ENCODE measurements at regions of chr13 and their contacts with region 1.

Region 1: GRCh38 chr13:74070065-74070464 is 64.1 kb downstream of the KLF12 start:
- DNase-seq: peak; percentile 73 to 81 (median 75)
- H3K4me3 ChIP-seq: peak overlapping the region in 1 of 2 donors; percentile 43
- H3K4me3 Mint-ChIP-seq: peak overlapping the region; percentile 68 to 89 (median 79)
- H3K27ac ChIP-seq: peak overlapping the region; percentile 15
- H3K27ac Mint-ChIP-seq: peak overlapping the region; percentile 73 to 94 (median 89)
- H3K4me1 ChIP-seq: peaks cover 92% of the 10 kb centered on the region
- H3K4me1 Mint-ChIP-seq: peaks cover 64 to 85% (median 77%) of the 10 kb centered on the region in 4 donors
- H3K27me3 ChIP-seq: no peaks in the 10 kb centered on the region
- H3K27me3 Mint-ChIP-seq: no peaks in the 10 kb centered on the region

Region 2: DNA sequence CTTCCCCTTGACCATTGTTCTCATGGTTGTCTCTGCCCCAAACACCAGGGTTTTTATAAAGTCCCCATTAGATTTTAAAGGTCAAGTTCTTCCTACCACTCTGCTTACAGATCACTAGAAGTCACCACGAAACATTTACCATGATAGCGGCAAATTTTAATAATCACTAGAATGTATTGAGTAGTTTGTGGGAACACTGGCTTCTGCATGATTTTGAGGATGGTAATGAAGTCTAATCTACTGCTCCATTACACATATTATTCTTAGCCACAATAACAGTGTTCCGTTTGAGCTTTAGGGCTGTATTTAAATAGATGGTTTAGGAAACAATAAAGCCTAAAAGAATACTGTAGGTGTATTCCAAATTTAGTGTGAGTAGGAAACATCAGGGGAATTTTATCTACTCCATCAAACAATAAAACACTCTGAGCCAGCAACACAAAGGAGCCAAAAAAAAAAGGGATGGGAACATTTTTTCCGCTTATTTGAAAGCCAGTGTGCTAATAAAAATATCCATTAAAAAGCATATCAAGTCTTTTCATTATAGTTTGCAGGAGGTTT is 14.4 kb after region 1 on chr13:
- CTCF ChIA-PET with region 1: interaction called, 3 read pairs
- POLR2A ChIA-PET with region 1: interaction called, 7 read pairs
- intact Hi-C with region 1: loop called (anchors 2 kb)
- DNase-seq: no peak
- H3K4me3 ChIP-seq: no peak overlapping the region
- H3K4me3 Mint-ChIP-seq: peak overlapping the region in 1 of 8 donors; percentile 33
- H3K27ac ChIP-seq: no peak overlapping the region
- H3K27ac Mint-ChIP-seq: peak overlapping the region in 3 of 7 donors; percentile 12 to 26 (median 19)
- H3K4me1 ChIP-seq: peaks cover 83% of the 10 kb centered on the region
- H3K4me1 Mint-ChIP-seq: peaks cover 61 to 87% (median 74%) of the 10 kb centered on the region in 4 donors
- H3K27me3 ChIP-seq: no peaks in the 10 kb centered on the region
- H3K27me3 Mint-ChIP-seq: no peaks in the 10 kb centered on the region